ENCODE measurements at regions of chr19 and their contacts with region 1.

Region 1: DNA sequence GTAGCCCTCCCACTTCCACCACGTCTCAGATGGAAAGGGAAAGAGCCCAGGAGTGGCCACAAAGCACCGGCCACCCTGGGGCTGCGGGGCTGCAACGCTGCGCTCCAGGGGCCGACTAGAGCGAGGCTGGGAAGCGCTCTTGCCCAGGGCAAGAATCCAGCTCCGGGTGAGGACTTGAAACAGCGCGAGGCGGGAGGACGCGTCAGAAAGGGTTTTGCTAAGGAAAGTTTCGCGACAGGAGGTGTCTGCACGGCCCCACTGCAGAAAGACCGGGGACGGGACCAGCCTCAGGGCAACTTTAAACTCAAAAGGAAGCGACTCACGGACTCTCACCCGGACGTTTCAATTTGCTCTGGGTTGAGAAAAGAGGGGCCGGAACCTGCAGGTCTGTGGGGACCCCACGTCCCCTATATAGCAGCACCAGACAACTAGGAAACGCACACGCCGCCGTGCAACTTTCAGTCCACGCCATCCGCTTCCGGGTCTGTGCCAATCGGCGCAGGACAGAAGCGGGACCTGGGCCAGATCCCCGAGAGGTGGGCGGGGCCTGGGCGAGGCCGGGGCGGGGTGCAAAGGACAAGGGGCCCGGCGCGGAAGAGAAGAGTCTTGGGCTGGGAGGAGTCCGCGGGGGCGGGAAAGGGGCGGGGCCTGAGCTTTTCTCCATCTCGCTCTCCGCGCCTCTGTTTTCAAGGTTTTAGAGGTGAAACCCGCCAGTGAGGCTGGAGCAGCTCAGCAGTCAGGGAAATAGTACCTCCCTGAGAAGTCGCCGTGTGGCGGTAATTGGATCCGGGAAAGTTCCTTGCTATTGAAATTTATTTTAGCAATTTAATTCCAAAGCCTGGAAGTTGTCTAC is at the start of gene ZNF816:
- DNase-seq: peak; percentile 98 to 99 (median 99)
- ATAC-seq: peak; percentile 99
- H3K4me3 ChIP-seq: peak within 1 kb of the TSS; percentile 76 to 77
- H3K4me3 Mint-ChIP-seq: peak within 1 kb of the TSS; percentile 94
- H3K27ac ChIP-seq: peak within 1 kb of the TSS; percentile 61 to 67
- H3K27ac Mint-ChIP-seq: peak within 1 kb of the TSS; percentile 95
- H3K4me1 ChIP-seq: peaks cover 9% of the 10 kb centered on the region
- H3K4me1 Mint-ChIP-seq: peaks cover 31% of the 10 kb centered on the region
- H3K27me3 ChIP-seq: no peaks in the 10 kb centered on the region
- H3K27me3 Mint-ChIP-seq: no peaks in the 10 kb centered on the region
- CTCF ChIP-seq: no peak
- total RNA-seq, gene ZNF816: 5.9 to 6.4 TPM

Region 2: DNA sequence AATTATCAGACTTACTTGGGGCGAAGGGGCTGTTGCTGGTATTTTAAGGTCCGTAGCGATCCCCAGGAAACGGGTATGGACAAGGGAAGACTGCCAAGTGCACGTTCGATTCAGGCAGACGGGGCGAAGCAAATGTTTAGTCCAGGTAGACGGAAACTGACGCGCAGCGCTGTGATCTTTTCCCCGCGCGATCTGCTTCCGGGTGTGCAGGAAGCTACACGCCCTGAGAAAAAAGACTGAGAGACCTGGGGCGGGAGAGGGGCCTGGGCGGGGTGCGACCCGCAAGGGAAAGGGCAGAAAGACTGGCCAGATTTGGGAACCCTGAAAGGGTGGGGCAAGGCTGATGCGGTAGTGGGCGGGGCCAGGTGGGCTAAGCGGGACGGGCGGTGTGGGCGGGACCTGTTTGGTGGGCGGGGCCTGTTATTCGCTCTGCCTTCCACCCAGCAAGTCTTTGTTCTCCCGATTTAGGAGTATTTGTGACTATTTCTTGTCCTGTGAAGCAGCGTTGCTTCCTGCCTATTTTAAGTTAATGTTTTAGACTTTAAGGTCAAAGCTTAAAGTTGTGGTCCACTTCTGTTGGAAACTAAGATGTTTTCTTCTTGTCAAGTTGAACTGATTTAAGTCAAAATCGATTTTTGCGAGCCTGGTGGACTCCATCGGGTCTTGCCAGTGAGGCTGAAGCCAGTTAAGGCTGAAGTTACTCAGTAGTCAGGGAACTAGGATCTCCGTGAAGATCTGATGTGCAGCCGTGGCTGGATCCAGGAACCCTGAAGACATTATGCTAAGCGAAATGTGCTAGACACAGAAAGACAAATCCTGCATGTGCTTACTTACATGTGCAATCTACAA is 791.1 kb before region 1 on chr19 and contains the start of gene ZNF836:
- CTCF ChIA-PET with region 1: no interaction called
- POLR2A ChIA-PET with region 1: no interaction called
- intact Hi-C with region 1: loop called in 1 of 2 experiments (anchors 5 kb)
- DNase-seq: peak; percentile 79 to 95 (median 92)
- ATAC-seq: peak; percentile 92
- H3K4me3 ChIP-seq: peak within 1 kb of the TSS; percentile 83 to 96
- H3K4me3 Mint-ChIP-seq: peak within 1 kb of the TSS; percentile 94
- H3K27ac ChIP-seq: peak within 1 kb of the TSS; percentile 72 to 96
- H3K27ac Mint-ChIP-seq: peak within 1 kb of the TSS; percentile 95
- H3K4me1 ChIP-seq: peaks cover 24% of the 10 kb centered on the region
- H3K4me1 Mint-ChIP-seq: peaks cover 41% of the 10 kb centered on the region
- H3K27me3 ChIP-seq: no peaks in the 10 kb centered on the region
- H3K27me3 Mint-ChIP-seq: no peaks in the 10 kb centered on the region
- CTCF ChIP-seq: no peak
- total RNA-seq, gene ZNF836: 17.6 to 22.1 TPM

Region 3: GRCh38 chr19:52897144-52897935 is 65.3 kb before region 1 on chr19 and contains the start of gene ZNF320:
- CTCF ChIA-PET with region 1: no interaction called
- POLR2A ChIA-PET with region 1: interaction called, 5 read pairs
- intact Hi-C with region 1: loop called (anchors 1 kb)
- DNase-seq: peak; percentile 80 to 96 (median 90)
- ATAC-seq: peak; percentile 100
- H3K4me3 ChIP-seq: peak within 1 kb of the TSS; percentile 74 to 77
- H3K4me3 Mint-ChIP-seq: peak within 1 kb of the TSS; percentile 93
- H3K27ac ChIP-seq: peak within 1 kb of the TSS; percentile 75
- H3K27ac Mint-ChIP-seq: peak within 1 kb of the TSS; percentile 92
- H3K4me1 ChIP-seq: peaks cover 13% of the 10 kb centered on the region
- H3K4me1 Mint-ChIP-seq: peaks cover 27% of the 10 kb centered on the region
- H3K27me3 ChIP-seq: no peaks in the 10 kb centered on the region
- H3K27me3 Mint-ChIP-seq: no peaks in the 10 kb centered on the region
- CTCF ChIP-seq: no peak
- total RNA-seq, gene ZNF320: 5.5 to 9.5 TPM

Region 4: DNA sequence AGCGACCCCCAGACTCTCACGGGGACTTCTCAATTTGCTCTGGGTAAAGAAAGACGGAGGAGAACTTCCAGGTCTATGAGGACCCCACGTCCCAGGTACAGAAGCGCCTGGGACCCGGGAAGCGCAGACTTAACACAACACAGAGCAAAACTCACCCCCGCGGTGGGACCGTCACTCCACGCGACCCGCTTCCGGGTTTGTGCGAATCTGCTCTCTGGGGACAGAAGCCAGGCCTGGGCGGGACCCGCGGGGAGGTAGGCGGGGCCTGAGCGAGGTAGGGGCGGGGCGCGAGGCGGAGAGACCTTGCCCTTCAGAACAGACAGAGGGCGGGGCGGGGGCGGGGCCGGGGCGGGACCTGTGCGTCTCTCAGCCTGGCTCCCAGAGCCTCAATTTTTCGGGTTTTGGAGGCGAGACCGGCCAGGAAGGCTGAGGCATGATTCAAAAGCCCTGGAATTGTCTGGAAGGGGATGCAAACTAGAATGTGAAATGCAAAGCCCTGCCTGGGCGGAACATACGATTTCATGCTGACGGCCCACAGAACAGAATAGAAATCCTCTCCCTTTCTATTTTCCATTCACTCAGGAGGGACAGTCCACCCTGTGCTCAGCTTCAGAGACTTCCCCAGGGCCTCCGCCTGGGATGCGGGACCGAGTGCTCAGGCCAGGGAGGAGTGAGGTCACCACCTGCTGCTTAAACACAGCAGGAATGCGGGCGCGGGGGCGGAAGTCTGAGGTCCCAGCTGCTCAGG is 20.1 kb before region 1 on chr19:
- CTCF ChIA-PET with region 1: no interaction called
- POLR2A ChIA-PET with region 1: interaction called, 3 read pairs
- intact Hi-C with region 1: loop called (anchors 1 kb)
- DNase-seq: peak; percentile 91 to 97 (median 95)
- ATAC-seq: peak; percentile 99
- H3K4me3 ChIP-seq: peak overlapping the region; percentile 88 to 91
- H3K4me3 Mint-ChIP-seq: peak overlapping the region; percentile 95
- H3K27ac ChIP-seq: peak overlapping the region; percentile 66 to 86
- H3K27ac Mint-ChIP-seq: peak overlapping the region; percentile 93
- H3K4me1 ChIP-seq: peaks cover 7% of the 10 kb centered on the region
- H3K4me1 Mint-ChIP-seq: peaks cover 28% of the 10 kb centered on the region
- H3K27me3 ChIP-seq: no peaks in the 10 kb centered on the region
- H3K27me3 Mint-ChIP-seq: no peaks in the 10 kb centered on the region
- CTCF ChIP-seq: no peak

Region 5: GRCh38 chr19:53158119-53158656 is 195.6 kb after region 1 on chr19:
- CTCF ChIA-PET with region 1: no interaction called
- POLR2A ChIA-PET with region 1: no interaction called
- intact Hi-C with region 1: loop called in 1 of 2 experiments (anchors 1 kb)
- DNase-seq: peak in 7 of 9 experiments; percentile 4 to 63 (median 47)
- ATAC-seq: peak; percentile 42
- H3K4me3 ChIP-seq: peak overlapping the region; percentile 59 to 60
- H3K4me3 Mint-ChIP-seq: peak overlapping the region; percentile 77
- H3K27ac ChIP-seq: peak overlapping the region; percentile 44 to 52
- H3K27ac Mint-ChIP-seq: peak overlapping the region; percentile 79
- H3K4me1 ChIP-seq: peaks cover 13% of the 10 kb centered on the region
- H3K4me1 Mint-ChIP-seq: peaks cover 23% of the 10 kb centered on the region
- H3K27me3 ChIP-seq: no peaks in the 10 kb centered on the region
- H3K27me3 Mint-ChIP-seq: no peaks in the 10 kb centered on the region
- CTCF ChIP-seq: no peak

Region 6: GRCh38 chr19:53394974-53395839 is 432.6 kb after region 1 on chr19 and contains the start of gene ZNF765:
- CTCF ChIA-PET with region 1: no interaction called
- POLR2A ChIA-PET with region 1: no interaction called
- intact Hi-C with region 1: loop called in 1 of 2 experiments (anchors 1 kb)
- DNase-seq: peak; percentile 94 to 99 (median 97)
- ATAC-seq: peak; percentile 99
- H3K4me3 ChIP-seq: peak within 1 kb of the TSS; percentile 86 to 97
- H3K4me3 Mint-ChIP-seq: peak within 1 kb of the TSS; percentile 96
- H3K27ac ChIP-seq: peak within 1 kb of the TSS; percentile 78 to 84
- H3K27ac Mint-ChIP-seq: peak within 1 kb of the TSS; percentile 96
- H3K4me1 ChIP-seq: peaks cover 12% of the 10 kb centered on the region
- H3K4me1 Mint-ChIP-seq: peaks cover 36% of the 10 kb centered on the region
- H3K27me3 ChIP-seq: no peaks in the 10 kb centered on the region
- H3K27me3 Mint-ChIP-seq: no peaks in the 10 kb centered on the region
- CTCF ChIP-seq: peak; percentile 53
- total RNA-seq, gene ZNF765: 9.6 to 12.4 TPM

Region 7: DNA sequence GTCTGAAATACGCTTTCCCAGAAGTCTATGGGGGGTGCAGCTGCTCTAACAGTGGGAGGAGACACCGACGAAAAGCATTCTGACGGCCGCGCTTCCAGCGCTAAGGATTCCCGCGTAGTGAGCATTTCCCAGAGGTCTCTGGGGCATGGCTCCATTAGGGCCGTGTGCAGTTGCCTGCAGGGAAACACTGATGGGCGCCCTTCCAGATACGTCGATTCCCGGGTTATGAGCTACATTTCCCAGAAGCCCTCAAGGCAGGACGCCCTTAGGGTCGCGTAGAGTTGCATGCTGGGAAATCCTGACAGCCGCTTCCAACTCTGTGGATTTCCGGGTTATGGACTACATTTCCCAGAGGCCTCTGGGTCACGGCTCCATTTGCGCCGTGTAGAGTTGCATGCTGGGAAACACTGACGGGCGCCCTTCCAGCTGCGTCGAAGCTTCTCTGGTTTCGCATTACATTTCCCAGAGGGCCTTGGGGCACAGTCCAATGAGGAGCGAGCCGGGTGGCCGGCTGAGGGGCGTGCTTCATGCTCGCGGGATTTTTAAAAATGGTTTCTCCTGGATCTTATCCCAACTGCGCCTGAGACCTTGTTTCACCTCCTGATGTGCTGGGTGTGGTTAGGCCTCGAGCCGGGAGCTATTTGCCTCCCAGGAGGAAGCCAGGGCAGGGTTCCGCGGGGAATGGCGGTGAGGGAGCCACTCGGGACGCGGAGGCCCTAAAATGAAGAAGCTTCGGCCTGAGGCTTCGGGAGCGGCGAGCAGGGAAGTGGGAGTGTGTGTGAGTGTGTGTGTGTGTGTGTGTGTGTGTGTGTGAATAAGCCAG is 558.1 kb after region 1 on chr19:
- CTCF ChIA-PET with region 1: no interaction called
- POLR2A ChIA-PET with region 1: no interaction called
- intact Hi-C with region 1: loop called in 1 of 2 experiments (anchors 1 kb)
- DNase-seq: peak; percentile 77 to 97 (median 85)
- ATAC-seq: peak; percentile 99
- H3K4me3 ChIP-seq: peak overlapping the region; percentile 54 to 63
- H3K4me3 Mint-ChIP-seq: peak overlapping the region; percentile 94
- H3K27ac ChIP-seq: peak overlapping the region; percentile 26 to 78
- H3K27ac Mint-ChIP-seq: peak overlapping the region; percentile 92
- H3K4me1 ChIP-seq: peaks cover 12% of the 10 kb centered on the region
- H3K4me1 Mint-ChIP-seq: peaks cover 17% of the 10 kb centered on the region
- H3K27me3 ChIP-seq: no peaks in the 10 kb centered on the region
- H3K27me3 Mint-ChIP-seq: no peaks in the 10 kb centered on the region
- CTCF ChIP-seq: no peak